Gastrocnemius medialis (tissue), 4 donors: ENCODE measurements at regions of chr10 and their contacts with region 1.

Region 1: DNA sequence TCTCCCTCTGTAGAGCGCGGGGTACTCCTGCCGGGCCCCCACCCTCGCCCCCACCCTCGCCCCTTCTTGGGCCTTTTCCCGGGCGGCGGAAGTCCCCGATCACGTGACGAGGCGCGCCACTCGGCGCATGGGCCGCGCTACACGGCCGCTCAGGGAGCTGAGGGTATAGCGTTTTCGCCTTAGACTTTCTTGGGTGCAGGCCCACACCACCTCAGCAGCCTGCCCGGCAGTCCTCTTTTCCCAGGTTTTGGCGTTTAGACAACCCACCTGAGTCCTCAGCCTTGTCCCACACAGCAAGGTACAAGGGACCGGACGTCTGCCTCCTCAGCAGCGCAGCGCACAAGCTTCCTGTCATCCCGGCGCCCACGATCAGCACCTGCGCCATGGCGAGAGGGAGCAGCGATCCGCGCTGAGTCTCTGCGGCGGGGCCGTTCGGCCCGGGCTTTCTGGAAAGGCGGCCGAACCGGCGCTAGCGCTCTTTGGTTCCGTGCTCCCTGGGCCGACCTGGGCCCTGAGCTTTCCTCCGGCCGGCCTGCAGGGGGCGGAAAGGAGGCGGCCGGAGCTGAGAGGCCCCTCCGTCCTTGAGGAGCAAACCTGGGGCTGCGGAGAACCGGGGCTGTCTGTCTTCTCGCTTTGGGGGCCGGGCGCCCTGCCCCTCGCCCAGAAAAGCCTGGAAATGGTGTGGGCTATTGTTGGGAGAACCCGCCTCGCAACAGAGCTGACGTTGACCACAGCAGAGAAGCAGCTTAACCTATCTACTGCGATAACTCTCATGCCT is at the start of gene RNLS:
- DNase-seq: peak; percentile 7 to 66
- ATAC-seq: peak; percentile 96
- H3K4me3 ChIP-seq: peak within 1 kb of the TSS; percentile 68 to 97 (median 84)
- H3K27ac ChIP-seq: peak within 1 kb of the TSS; percentile 88 to 98 (median 92)
- H3K4me1 ChIP-seq: peaks cover 0 to 6% of the 10 kb centered on the region in 2 donors
- H3K27me3 ChIP-seq: no peaks in the 10 kb centered on the region
- CTCF ChIP-seq: peak; percentile 69 to 84 (median 80)
- POLR2A ChIP-seq: peak in 1 of 2 donors; percentile 31
- total RNA-seq, gene RNLS: 8.1 to 17.5 (median 9.7) TPM

Region 2: GRCh38 chr10:88810196-88810961 is 227.4 kb after region 1 on chr10:
- in situ Hi-C with region 1: loop called in 1 of 4 experiments (anchors 25 kb)
- intact Hi-C with region 1: no loop called
- DNase-seq: no peak
- ATAC-seq: peak in 1 of 2 donors; percentile 46
- H3K4me3 ChIP-seq: no peak overlapping the region
- H3K27ac ChIP-seq: no peak overlapping the region
- H3K4me1 ChIP-seq: no peaks in the 10 kb centered on the region
- H3K27me3 ChIP-seq: no peaks in the 10 kb centered on the region
- CTCF ChIP-seq: peak in 3 of 5 experiments; percentile 17 to 53 (median 34)
- POLR2A ChIP-seq: no peak